Dendritic cell treated with granulocyte-macrophage colony-stimulating factor and Interleukin-4, amounts not matched to agents 40 ng/mL and 50 ng/mL, for 4 days (primary cell): ENCODE measurements at regions of chr4 and their contacts with region 1.

Region 1: DNA sequence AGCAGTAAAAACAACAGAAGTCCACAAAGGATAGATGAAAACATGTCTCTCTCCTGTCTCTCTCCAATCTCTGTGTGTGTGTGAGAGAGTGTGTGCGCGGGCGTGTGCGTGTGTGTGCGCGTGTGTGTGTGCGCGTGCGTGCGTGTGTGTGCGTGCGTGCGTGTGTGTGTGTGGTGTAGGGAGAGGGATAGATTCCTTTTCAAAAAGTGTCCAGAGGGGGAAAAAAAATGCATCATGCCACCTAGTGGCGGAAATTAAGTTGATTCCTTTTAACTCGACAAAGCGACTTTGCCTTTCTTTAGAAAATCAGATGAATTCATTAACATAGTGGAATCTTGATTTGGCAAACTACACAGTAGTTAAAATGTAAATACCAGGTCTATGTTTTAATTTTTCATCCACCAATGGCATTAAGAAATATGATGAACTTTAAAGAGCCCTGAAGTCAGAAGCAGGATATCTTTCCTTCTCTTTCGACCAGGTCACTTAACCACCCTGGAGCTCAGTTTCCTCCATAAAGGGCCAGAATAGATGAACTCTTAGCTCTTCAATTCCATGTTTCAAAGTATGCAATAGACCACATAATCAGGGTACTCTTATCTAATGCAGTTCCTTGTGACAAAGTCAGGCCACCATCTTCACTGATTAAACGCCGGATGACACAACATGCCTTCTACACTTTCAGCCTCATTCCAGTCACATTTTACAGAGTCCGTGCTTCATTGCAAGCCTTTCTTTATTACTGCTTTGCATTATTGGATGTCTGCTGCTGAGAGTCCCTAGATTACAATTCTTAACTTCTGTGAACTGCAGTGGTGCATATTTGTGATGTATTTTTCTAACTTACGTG is 162.8 kb downstream of the FBXO8 start:
- H3K4me3 Mint-ChIP-seq: peak overlapping the region; percentile 61
- H3K27ac Mint-ChIP-seq: no peak overlapping the region
- H3K4me1 Mint-ChIP-seq: peaks cover 11% of the 10 kb centered on the region
- H3K27me3 Mint-ChIP-seq: peaks cover 34% of the 10 kb centered on the region

Region 2: GRCh38 chr4:172786039-172786792 is 1334.5 kb before region 1 on chr4:
- intact Hi-C with region 1: no loop called
- H3K4me3 Mint-ChIP-seq: no peak overlapping the region
- H3K27ac Mint-ChIP-seq: no peak overlapping the region
- H3K4me1 Mint-ChIP-seq: peaks cover 25% of the 10 kb centered on the region
- H3K27me3 Mint-ChIP-seq: peaks cover 3% of the 10 kb centered on the region

Region 3: GRCh38 chr4:173565281-173565680 is 555.4 kb before region 1 on chr4:
- intact Hi-C with region 1: no loop called
- H3K4me3 Mint-ChIP-seq: no peak overlapping the region
- H3K27ac Mint-ChIP-seq: no peak overlapping the region
- H3K4me1 Mint-ChIP-seq: no peaks in the 10 kb centered on the region
- H3K27me3 Mint-ChIP-seq: peaks cover 16% of the 10 kb centered on the region

Region 4: DNA sequence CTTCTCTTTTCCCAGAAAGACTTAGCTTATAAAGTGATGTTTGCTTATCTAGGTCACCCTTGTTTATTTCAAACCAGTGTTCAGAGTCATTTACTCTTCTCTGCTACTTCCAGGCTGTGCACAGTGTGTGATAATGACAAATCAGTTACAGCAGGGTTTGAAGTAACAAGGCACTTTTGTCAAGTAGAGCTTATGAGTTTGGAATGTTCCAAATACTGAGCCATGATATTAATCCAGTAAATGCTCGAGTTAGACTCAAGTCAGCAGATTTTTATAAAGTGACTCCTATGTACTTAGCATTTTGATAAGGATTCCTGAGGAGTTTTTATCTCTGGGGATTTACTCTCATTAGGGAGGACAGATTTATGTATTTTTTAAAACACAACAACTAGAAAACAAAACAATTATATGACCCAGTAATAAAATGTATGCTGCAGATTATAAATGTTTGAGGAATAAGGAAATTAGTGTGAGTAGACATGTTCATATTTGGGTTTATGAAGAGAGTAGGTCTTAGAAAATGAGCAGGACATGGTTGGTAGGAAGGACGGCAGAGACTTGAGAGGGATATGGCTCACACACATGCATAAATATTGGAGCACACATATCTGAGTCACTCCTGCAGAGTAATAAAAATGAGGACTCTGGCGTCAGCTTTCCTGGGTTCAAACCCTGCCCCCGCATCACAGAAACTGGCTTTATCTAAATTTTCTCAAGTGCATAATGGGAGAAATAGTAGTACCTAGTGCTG is 108.4 kb before region 1 on chr4:
- intact Hi-C with region 1: loop called (anchors 2 kb)
- H3K4me3 Mint-ChIP-seq: no peak overlapping the region
- H3K27ac Mint-ChIP-seq: no peak overlapping the region
- H3K4me1 Mint-ChIP-seq: no peaks in the 10 kb centered on the region
- H3K27me3 Mint-ChIP-seq: peaks cover 4% of the 10 kb centered on the region